ENCODE measurements at regions of chr1 and their contacts with region 1.

Region 1: DNA sequence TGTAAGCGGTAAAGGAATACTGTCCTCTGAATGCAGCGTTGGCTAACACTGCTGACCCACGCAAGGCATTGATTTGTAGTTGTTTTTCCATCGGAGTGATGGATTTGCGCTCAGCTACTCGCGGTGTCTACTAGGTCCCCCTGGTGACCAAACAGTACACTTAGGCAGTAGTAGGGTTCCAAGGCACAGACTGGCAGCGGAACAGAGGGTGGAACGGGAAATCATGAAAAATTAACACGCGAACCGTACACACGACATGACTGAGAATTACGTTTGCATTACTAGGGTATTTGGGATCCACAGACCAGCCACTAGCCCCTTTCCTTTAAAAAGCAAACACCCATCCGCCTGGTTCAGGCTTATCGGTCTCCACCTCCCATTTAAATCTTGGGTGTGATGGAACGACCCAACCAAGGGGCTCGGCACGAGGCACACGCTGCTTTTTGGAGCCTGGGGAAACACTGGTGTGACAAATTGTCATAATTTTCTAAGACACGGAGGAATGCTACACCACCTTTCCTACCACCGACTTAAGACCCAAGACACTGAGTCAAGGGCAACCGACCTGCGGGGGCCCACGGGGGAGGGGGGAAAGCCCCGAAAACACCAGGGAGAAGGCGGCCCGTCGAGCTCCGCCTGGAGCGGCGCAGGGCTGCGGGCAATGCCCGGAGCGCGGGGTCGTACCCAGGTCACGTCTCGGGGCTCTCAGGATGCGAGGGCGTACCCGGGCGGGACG is 699 bp downstream of the DIPK1A start:
- DNase-seq: peak; percentile 76
- ATAC-seq: peak; percentile 50
- H3K4me3 Mint-ChIP-seq: peak overlapping the region; percentile 95
- H3K27ac Mint-ChIP-seq: peak overlapping the region; percentile 97
- H3K4me1 Mint-ChIP-seq: peaks cover 36% of the 10 kb centered on the region
- H3K27me3 Mint-ChIP-seq: no peaks in the 10 kb centered on the region
- CTCF ChIP-seq: peak; percentile 11

Region 2: DNA sequence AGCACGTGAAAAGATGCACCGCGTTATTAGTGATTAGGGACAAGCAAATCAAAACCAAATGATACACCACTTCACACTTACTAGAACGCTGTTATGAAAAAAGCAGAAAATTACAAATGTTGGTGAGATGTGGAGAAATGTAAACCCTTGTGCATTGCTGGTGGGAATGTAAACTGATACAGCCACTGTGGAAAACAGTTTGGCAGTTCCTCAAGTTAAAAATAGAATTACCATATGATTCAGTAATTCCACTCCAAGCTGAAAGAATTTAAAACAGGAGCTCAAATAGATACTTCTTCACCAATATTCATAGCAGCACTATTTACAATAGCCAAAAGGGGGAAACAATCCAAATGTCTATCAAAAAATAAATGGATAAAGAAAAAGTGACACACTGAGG is 165.4 kb before region 1 on chr1:
- CTCF ChIA-PET with region 1: no interaction called
- POLR2A ChIA-PET with region 1: no interaction called
- intact Hi-C with region 1: no loop called
- DNase-seq: no peak
- ATAC-seq: no peak
- H3K4me3 Mint-ChIP-seq: no peak overlapping the region
- H3K27ac Mint-ChIP-seq: no peak overlapping the region
- H3K4me1 Mint-ChIP-seq: peaks cover 2% of the 10 kb centered on the region
- H3K27me3 Mint-ChIP-seq: peaks cover 34% of the 10 kb centered on the region
- CTCF ChIP-seq: no peak

Region 3: GRCh38 chr1:92831762-92832536 is 128.6 kb before region 1 on chr1 and contains the start of gene RPL5:
- CTCF ChIA-PET with region 1: interaction called, 12 read pairs
- POLR2A ChIA-PET with region 1: interaction called, 21 read pairs
- intact Hi-C with region 1: no loop called
- DNase-seq: peak; percentile 98
- ATAC-seq: peak; percentile 93
- H3K4me3 Mint-ChIP-seq: peak within 1 kb of the TSS; percentile 99
- H3K27ac Mint-ChIP-seq: peak within 1 kb of the TSS; percentile 99
- H3K4me1 Mint-ChIP-seq: peaks cover 28% of the 10 kb centered on the region
- H3K27me3 Mint-ChIP-seq: no peaks in the 10 kb centered on the region
- CTCF ChIP-seq: peak; percentile 95
- total RNA-seq, gene RPL5: 1,782 to 1,792 TPM

Region 4: DNA sequence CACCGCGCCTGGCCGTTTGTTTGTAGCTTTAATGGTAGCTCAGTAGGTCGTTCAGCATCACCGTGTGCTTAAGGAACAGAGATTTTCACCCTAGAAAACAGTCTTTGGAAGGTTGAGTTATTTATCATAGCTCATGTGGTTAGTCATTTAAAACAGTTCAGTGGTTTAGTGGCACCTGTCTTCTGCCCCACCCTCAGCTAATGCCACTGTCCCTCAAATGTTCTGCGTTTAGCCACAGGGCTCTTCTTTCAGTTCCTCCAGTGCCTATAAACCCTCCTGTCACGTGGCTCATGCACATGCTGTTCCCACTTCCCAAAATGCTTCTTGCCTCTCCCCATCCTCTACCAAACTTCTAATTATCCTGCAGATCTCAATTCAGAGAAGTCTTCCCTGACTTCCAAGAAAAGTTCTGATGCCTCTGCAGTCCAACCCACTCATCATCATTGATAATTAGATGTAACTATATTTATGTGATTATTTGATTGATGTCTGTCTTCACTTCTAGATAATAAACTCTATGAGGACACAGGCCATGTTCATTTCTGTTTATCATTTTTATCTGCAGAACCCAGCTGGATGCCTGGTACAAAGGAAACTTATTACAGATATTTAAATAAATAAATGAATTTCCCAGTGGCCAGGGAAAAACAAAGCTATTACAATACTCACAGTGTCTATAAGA is 15.1 kb after region 1 on chr1:
- CTCF ChIA-PET with region 1: interaction called, 20 read pairs
- POLR2A ChIA-PET with region 1: interaction called, 49 read pairs
- intact Hi-C with region 1: no loop called
- DNase-seq: peak; percentile 48
- ATAC-seq: peak; percentile 12
- H3K4me3 Mint-ChIP-seq: no peak overlapping the region
- H3K27ac Mint-ChIP-seq: peak overlapping the region; percentile 95
- H3K4me1 Mint-ChIP-seq: peaks cover 73% of the 10 kb centered on the region
- H3K27me3 Mint-ChIP-seq: no peaks in the 10 kb centered on the region
- CTCF ChIP-seq: no peak

Region 5: GRCh38 chr1:92980732-92981647 is 20.4 kb after region 1 on chr1:
- CTCF ChIA-PET with region 1: interaction called, 20 read pairs
- POLR2A ChIA-PET with region 1: interaction called, 49 read pairs
- intact Hi-C with region 1: no loop called
- DNase-seq: peak; percentile 69
- ATAC-seq: peak; percentile 66
- H3K4me3 Mint-ChIP-seq: peak overlapping the region; percentile 68
- H3K27ac Mint-ChIP-seq: peak overlapping the region; percentile 95
- H3K4me1 Mint-ChIP-seq: peaks cover 72% of the 10 kb centered on the region
- H3K27me3 Mint-ChIP-seq: no peaks in the 10 kb centered on the region
- CTCF ChIP-seq: no peak

Region 6: GRCh38 chr1:93033785-93034184 is 73.2 kb after region 1 on chr1:
- CTCF ChIA-PET with region 1: no interaction called
- POLR2A ChIA-PET with region 1: no interaction called
- intact Hi-C with region 1: no loop called
- DNase-seq: no peak
- ATAC-seq: peak; percentile 66
- H3K4me3 Mint-ChIP-seq: no peak overlapping the region
- H3K27ac Mint-ChIP-seq: no peak overlapping the region
- H3K4me1 Mint-ChIP-seq: peaks cover 33% of the 10 kb centered on the region
- H3K27me3 Mint-ChIP-seq: no peaks in the 10 kb centered on the region
- CTCF ChIP-seq: no peak